ENCODE measurements at regions of chr11 and their contacts with region 1.

Region 1: GRCh38 chr11:122853971-122854446 is 15.7 kb downstream of the CRTAM start:
- DNase-seq: peak in 4 of 5 donors; percentile 30 to 72 (median 61)
- H3K4me3 ChIP-seq: no peak overlapping the region
- H3K4me3 Mint-ChIP-seq: no peak overlapping the region
- H3K27ac ChIP-seq: no peak overlapping the region
- H3K27ac Mint-ChIP-seq: peak overlapping the region in 6 of 8 donors; percentile 32 to 75 (median 52)
- H3K4me1 ChIP-seq: peaks cover 51% of the 10 kb centered on the region
- H3K4me1 Mint-ChIP-seq: peaks cover 51 to 64% (median 62%) of the 10 kb centered on the region in 3 donors
- H3K27me3 ChIP-seq: no peaks in the 10 kb centered on the region
- H3K27me3 Mint-ChIP-seq: no peaks in the 10 kb centered on the region

Region 2: DNA sequence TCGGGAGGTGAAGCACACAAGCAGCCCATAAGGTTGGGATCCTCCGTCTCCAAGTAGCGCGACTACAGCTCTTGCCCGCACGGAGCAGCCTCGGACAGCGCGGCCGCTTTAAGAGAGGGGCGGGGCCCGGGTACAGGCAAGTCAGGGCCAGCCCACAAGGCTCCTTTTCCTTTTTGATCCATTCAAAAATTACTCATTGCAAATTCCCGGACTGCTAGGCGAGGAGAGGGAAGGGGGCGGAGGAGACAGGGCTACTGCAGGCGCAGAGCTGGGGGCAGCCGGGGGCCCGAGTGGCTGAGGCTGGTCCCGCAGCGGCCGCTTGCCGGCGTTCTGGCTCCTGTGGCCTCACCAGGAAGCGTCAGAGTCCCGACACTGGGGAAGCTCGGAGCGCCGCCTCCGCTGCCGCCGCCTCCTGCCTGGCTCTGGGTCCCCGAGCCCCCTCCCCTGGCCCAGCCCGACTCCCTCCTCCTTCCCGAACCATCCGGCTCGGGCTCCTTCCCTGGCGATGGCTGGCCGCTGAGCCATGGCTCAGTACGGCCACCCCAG is 198.4 kb before region 1 on chr11 and contains the start of gene UBASH3B:
- CTCF ChIA-PET with region 1: interaction called, 16 read pairs
- POLR2A ChIA-PET with region 1: no interaction called
- DNase-seq: peak; percentile 39 to 74 (median 60)
- H3K4me3 ChIP-seq: peak within 1 kb of the TSS; percentile 82
- H3K4me3 Mint-ChIP-seq: peak within 1 kb of the TSS; percentile 94 to 99 (median 98)
- H3K27ac ChIP-seq: peak within 1 kb of the TSS; percentile 54
- H3K27ac Mint-ChIP-seq: peak within 1 kb of the TSS; percentile 87 to 95 (median 92)
- H3K4me1 ChIP-seq: peaks cover 41% of the 10 kb centered on the region
- H3K4me1 Mint-ChIP-seq: peaks cover 44 to 52% (median 47%) of the 10 kb centered on the region in 3 donors
- H3K27me3 ChIP-seq: no peaks in the 10 kb centered on the region
- H3K27me3 Mint-ChIP-seq: peaks cover 0 to 5% of the 10 kb centered on the region in 2 donors
- total RNA-seq, gene UBASH3B: 34.6 to 36.4 TPM

Region 3: GRCh38 chr11:122727101-122727929 is 126.7 kb before region 1 on chr11:
- CTCF ChIA-PET with region 1: no interaction called
- POLR2A ChIA-PET with region 1: no interaction called
- DNase-seq: peak in 2 of 5 donors; percentile 31 to 53
- H3K4me3 ChIP-seq: peak overlapping the region; percentile 21
- H3K4me3 Mint-ChIP-seq: peak overlapping the region; percentile 55 to 92 (median 83)
- H3K27ac ChIP-seq: peak overlapping the region; percentile 14
- H3K27ac Mint-ChIP-seq: peak overlapping the region; percentile 71 to 96 (median 90)
- H3K4me1 ChIP-seq: peaks cover 57% of the 10 kb centered on the region
- H3K4me1 Mint-ChIP-seq: peaks cover 60 to 73% (median 62%) of the 10 kb centered on the region in 3 donors
- H3K27me3 ChIP-seq: no peaks in the 10 kb centered on the region
- H3K27me3 Mint-ChIP-seq: peaks cover 0 to 1% of the 10 kb centered on the region in 2 donors

Region 4: DNA sequence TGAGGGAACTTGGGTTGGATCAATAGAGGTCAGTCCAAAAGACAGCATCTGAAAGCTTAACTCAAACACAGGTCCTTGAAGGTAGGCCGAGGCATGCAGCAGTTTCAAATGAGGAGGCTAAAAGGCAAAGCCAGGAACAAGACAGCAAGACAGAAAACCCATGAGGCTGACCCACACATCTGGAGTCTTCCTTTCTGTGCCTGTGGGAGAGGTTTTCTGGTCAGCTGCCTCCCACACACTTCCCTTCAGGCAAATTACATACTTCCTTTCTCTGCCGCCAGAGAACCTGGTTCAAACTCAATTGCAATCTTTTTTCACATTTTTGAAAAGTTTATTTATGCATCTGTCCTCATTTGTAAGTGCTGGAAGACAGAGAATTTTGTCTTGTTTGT is 45.5 kb before region 1 on chr11:
- CTCF ChIA-PET with region 1: interaction called, 116 read pairs
- POLR2A ChIA-PET with region 1: interaction called, 7 read pairs
- DNase-seq: no peak
- H3K4me3 ChIP-seq: no peak overlapping the region
- H3K4me3 Mint-ChIP-seq: peak overlapping the region in 3 of 7 donors; percentile 16 to 38 (median 37)
- H3K27ac ChIP-seq: no peak overlapping the region
- H3K27ac Mint-ChIP-seq: peak overlapping the region in 7 of 8 donors; percentile 5 to 82 (median 70)
- H3K4me1 ChIP-seq: peaks cover 19% of the 10 kb centered on the region
- H3K4me1 Mint-ChIP-seq: peaks cover 28 to 43% (median 40%) of the 10 kb centered on the region in 3 donors
- H3K27me3 ChIP-seq: no peaks in the 10 kb centered on the region
- H3K27me3 Mint-ChIP-seq: no peaks in the 10 kb centered on the region

Region 5: GRCh38 chr11:122832721-122833470 is 21.1 kb before region 1 on chr11:
- CTCF ChIA-PET with region 1: interaction called, 166 read pairs
- POLR2A ChIA-PET with region 1: interaction called, 99 read pairs
- DNase-seq: no peak
- H3K4me3 ChIP-seq: no peak overlapping the region
- H3K4me3 Mint-ChIP-seq: peak overlapping the region in 4 of 7 donors; percentile 6 to 37 (median 22)
- H3K27ac ChIP-seq: no peak overlapping the region
- H3K27ac Mint-ChIP-seq: peak overlapping the region; percentile 25 to 85 (median 65)
- H3K4me1 ChIP-seq: peaks cover 8% of the 10 kb centered on the region
- H3K4me1 Mint-ChIP-seq: peaks cover 45 to 53% (median 47%) of the 10 kb centered on the region in 3 donors
- H3K27me3 ChIP-seq: no peaks in the 10 kb centered on the region
- H3K27me3 Mint-ChIP-seq: no peaks in the 10 kb centered on the region

Region 6: GRCh38 chr11:122998727-122999366 is 144.8 kb after region 1 on chr11:
- CTCF ChIA-PET with region 1: no interaction called
- POLR2A ChIA-PET with region 1: no interaction called
- DNase-seq: no peak
- H3K4me3 ChIP-seq: no peak overlapping the region
- H3K4me3 Mint-ChIP-seq: no peak overlapping the region
- H3K27ac ChIP-seq: no peak overlapping the region
- H3K27ac Mint-ChIP-seq: no peak overlapping the region
- H3K4me1 ChIP-seq: no peaks in the 10 kb centered on the region
- H3K4me1 Mint-ChIP-seq: no peaks in the 10 kb centered on the region
- H3K27me3 ChIP-seq: no peaks in the 10 kb centered on the region
- H3K27me3 Mint-ChIP-seq: peaks cover 16 to 64% of the 10 kb centered on the region in 2 donors

Region 7: DNA sequence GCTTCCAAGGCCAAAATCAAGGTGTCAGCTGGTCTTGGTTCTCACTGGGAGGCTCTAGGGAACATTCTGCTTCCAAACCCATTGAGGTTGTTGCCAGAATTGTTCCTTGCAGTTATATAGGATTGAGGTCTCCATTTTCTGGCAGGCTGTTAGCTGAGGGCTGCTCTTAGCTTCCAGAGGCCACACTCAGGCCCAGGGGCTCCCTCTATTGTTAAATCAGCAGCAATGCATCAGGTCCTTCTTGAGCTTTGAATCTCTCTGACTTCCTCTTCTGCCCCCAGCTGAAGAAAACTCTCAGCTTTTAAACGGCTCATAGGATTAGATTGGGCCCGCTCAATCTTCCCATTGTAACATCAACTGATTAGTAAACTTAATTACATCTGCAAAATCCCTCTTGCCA is 167.0 kb after region 1 on chr11:
- CTCF ChIA-PET with region 1: interaction called, 13 read pairs
- POLR2A ChIA-PET with region 1: interaction called, 3 read pairs
- DNase-seq: peak in 2 of 5 donors; percentile 7 to 18
- H3K4me3 ChIP-seq: no peak overlapping the region
- H3K4me3 Mint-ChIP-seq: no peak overlapping the region
- H3K27ac ChIP-seq: no peak overlapping the region
- H3K27ac Mint-ChIP-seq: peak overlapping the region in 1 of 8 donors; percentile 40
- H3K4me1 ChIP-seq: no peaks in the 10 kb centered on the region
- H3K4me1 Mint-ChIP-seq: peaks cover 5 to 10% (median 8%) of the 10 kb centered on the region in 3 donors
- H3K27me3 ChIP-seq: no peaks in the 10 kb centered on the region
- H3K27me3 Mint-ChIP-seq: peaks cover 5 to 12% of the 10 kb centered on the region in 2 donors